ENCODE measurements at regions of chr11 and their contacts with region 1.

Region 1: DNA sequence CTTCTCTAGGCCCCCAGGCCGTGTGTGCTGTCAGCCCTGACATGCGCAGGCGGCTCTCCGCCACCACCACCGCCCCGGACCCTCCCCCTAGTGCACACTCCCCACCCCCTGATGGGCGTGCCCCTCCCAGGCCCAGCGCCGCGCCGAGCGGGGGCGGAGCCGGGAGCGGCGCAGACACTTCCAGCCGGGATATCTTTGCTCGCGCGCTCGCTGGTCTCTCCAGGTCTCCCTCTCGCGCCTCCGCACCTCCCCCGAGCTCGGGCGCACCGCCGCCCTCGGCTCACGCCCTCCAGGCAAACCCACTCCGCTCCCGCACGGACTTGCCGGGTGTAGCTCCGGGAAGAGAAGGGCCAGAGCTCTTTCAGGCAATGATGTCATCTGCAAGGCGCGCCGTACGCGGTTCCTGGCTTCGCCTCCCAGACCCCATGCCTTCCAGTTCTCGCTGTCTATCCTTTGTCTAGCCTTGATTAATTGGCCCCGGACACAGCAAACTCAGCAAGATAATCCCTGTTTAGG is at the start of gene SCN3B:
- DNase-seq: peak in 3 of 9 donors; percentile 13 to 33 (median 14)
- ATAC-seq: peak; percentile 32
- H3K4me3 ChIP-seq: peak within 1 kb of the TSS; percentile 44
- H3K4me3 Mint-ChIP-seq: peak within 1 kb of the TSS; percentile 67 to 84 (median 74)
- H3K27ac ChIP-seq: no peak within 1 kb of the TSS
- H3K27ac Mint-ChIP-seq: no peak within 1 kb of the TSS
- H3K4me1 ChIP-seq: peaks cover 0 to 3% of the 10 kb centered on the region in 2 donors
- H3K4me1 Mint-ChIP-seq: peaks cover 10 to 33% (median 25%) of the 10 kb centered on the region in 7 donors
- H3K27me3 ChIP-seq: peaks cover 0 to 16% of the 10 kb centered on the region in 2 donors
- H3K27me3 Mint-ChIP-seq: peaks cover 41 to 65% (median 43%) of the 10 kb centered on the region in 5 donors
- total RNA-seq, gene SCN3B: not detected

Region 2: DNA sequence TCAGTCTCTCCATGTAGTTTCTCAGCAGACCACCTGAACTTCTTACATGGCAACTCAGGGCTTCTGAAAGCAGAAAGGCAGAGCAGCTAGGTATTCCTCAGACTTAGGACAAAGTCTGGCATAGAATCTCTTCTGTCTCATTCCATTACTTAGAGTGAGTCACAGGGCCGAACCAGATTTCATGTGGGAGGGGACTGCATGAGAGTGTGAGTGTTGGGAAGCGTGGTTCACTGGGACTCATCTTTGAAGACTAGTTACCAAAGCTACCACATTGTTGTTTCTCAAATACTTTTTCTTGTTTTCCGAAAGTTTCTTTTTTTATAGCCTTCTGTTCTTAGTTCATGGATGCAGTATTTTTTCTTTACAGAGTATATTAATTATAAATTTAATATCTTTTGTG is 35.9 kb after region 1 on chr11:
- CTCF ChIA-PET with region 1: no interaction called
- POLR2A ChIA-PET with region 1: no interaction called
- intact Hi-C with region 1: loop called in 1 of 2 experiments (anchors 5 kb)
- DNase-seq: no peak
- ATAC-seq: no peak
- H3K4me3 ChIP-seq: no peak overlapping the region
- H3K4me3 Mint-ChIP-seq: no peak overlapping the region
- H3K27ac ChIP-seq: no peak overlapping the region
- H3K27ac Mint-ChIP-seq: no peak overlapping the region
- H3K4me1 ChIP-seq: no peaks in the 10 kb centered on the region
- H3K4me1 Mint-ChIP-seq: peaks cover 0 to 2% (median 0%) of the 10 kb centered on the region in 7 donors
- H3K27me3 ChIP-seq: peaks cover 0 to 5% of the 10 kb centered on the region in 2 donors
- H3K27me3 Mint-ChIP-seq: peaks cover 5 to 27% (median 24%) of the 10 kb centered on the region in 5 donors

Measured in naive thymus-derived CD4-positive, alpha-beta T cell (primary cell).